CD8-positive, alpha-beta T cell (primary cell): ENCODE measurements at regions of chr19 and their contacts with region 1.

Region 1: GRCh38 chr19:18013210-18014111 is 5.5 kb downstream of the ARRDC2 start:
- DNase-seq: peak in 1 of 9 experiments; percentile 52
- ATAC-seq: peak; percentile 27
- H3K4me3 ChIP-seq: peak overlapping the region in 1 of 2 experiments; percentile 35
- H3K4me3 Mint-ChIP-seq: peak overlapping the region; percentile 73
- H3K27ac ChIP-seq: peak overlapping the region; percentile 49 to 56
- H3K27ac Mint-ChIP-seq: peak overlapping the region; percentile 97
- H3K4me1 ChIP-seq: peaks cover 69% of the 10 kb centered on the region
- H3K4me1 Mint-ChIP-seq: peaks cover 63% of the 10 kb centered on the region
- H3K27me3 ChIP-seq: no peaks in the 10 kb centered on the region
- H3K27me3 Mint-ChIP-seq: no peaks in the 10 kb centered on the region
- CTCF ChIP-seq: no peak

Region 2: DNA sequence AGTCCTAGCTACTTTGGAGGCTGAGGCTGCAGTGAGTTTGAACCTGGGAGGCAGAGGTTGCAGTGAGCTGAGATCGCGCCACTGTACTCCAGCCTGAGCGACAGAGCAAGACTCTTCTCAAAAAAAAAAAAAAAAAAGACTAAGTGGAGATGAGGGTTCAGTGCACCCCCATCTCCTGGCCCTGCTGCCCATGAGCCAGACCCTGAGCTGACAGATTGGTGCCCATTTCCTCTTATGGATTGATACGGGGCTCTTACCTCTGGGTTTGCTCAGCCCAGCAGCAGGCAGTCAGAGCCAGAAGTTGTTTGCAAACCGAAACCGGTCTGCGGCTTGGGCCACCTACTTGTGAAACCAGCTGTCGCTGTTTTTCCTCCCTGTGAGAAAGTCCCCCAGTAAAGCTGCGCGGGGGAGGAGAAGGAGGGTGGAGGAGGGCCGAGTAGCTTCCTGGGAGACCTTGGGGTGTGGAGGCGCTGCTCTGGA is 31.4 kb after region 1 on chr19:
- CTCF ChIA-PET with region 1: interaction called, 8 read pairs
- POLR2A ChIA-PET with region 1: interaction called, 23 read pairs
- intact Hi-C with region 1: loop called in 1 of 2 experiments (anchors 2 kb)
- DNase-seq: peak; percentile 68 to 96 (median 87)
- ATAC-seq: peak; percentile 91
- H3K4me3 ChIP-seq: peak overlapping the region; percentile 44
- H3K4me3 Mint-ChIP-seq: peak overlapping the region; percentile 79
- H3K27ac ChIP-seq: peak overlapping the region; percentile 55 to 61
- H3K27ac Mint-ChIP-seq: peak overlapping the region; percentile 95
- H3K4me1 ChIP-seq: peaks cover 33% of the 10 kb centered on the region
- H3K4me1 Mint-ChIP-seq: peaks cover 43% of the 10 kb centered on the region
- H3K27me3 ChIP-seq: no peaks in the 10 kb centered on the region
- H3K27me3 Mint-ChIP-seq: no peaks in the 10 kb centered on the region
- CTCF ChIP-seq: no peak